Naive thymus-derived CD4-positive, alpha-beta T cell (primary cell): ENCODE measurements at regions of chr1 and their contacts with region 1.

Region 1: DNA sequence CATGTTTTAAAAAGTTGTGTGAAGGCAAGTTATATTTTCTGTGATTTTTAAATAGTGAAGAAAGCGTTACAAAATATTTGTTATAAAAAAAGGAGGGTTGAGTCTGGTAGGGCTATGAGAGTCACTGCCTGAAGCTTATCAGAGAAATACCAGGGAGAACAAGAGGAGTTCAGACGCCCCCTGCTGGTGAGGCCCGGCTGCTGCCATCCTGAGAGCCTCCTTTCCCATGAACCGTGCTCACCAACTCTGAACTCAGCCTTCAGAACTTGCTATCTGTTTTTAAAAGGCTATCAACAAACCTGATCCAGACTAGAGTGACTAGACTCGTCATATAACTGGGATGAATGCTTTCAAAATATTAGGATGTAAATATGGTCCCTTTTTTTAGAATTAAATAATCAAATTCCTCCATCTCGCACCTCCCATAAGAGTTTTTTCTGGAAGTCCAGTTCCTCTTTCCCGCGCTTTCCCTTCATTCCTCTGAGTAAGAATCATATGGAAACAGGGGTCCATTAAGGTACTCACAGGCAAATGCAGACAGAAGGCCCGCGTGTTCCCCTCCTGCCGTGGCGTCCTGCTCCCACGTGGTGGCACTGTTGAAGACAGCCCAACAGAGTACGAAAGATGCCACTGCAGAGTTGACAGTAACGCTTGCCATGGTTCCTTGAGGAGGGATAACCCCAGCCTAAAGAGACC is 26.2 kb upstream of the SPATA6 start:
- DNase-seq: peak; percentile 15 to 70 (median 55)
- ATAC-seq: peak; percentile 87
- H3K4me3 ChIP-seq: no peak overlapping the region
- H3K4me3 Mint-ChIP-seq: peak overlapping the region in 6 of 10 donors; percentile 25 to 63 (median 52)
- H3K27ac ChIP-seq: no peak overlapping the region
- H3K27ac Mint-ChIP-seq: peak overlapping the region in 1 of 9 donors; percentile 28
- H3K4me1 ChIP-seq: peaks cover 0 to 4% of the 10 kb centered on the region in 2 donors
- H3K4me1 Mint-ChIP-seq: peaks cover 5 to 11% (median 7%) of the 10 kb centered on the region in 7 donors
- H3K27me3 ChIP-seq: no peaks in the 10 kb centered on the region
- H3K27me3 Mint-ChIP-seq: peaks cover 0 to 5% (median 1%) of the 10 kb centered on the region in 5 donors

Region 2: DNA sequence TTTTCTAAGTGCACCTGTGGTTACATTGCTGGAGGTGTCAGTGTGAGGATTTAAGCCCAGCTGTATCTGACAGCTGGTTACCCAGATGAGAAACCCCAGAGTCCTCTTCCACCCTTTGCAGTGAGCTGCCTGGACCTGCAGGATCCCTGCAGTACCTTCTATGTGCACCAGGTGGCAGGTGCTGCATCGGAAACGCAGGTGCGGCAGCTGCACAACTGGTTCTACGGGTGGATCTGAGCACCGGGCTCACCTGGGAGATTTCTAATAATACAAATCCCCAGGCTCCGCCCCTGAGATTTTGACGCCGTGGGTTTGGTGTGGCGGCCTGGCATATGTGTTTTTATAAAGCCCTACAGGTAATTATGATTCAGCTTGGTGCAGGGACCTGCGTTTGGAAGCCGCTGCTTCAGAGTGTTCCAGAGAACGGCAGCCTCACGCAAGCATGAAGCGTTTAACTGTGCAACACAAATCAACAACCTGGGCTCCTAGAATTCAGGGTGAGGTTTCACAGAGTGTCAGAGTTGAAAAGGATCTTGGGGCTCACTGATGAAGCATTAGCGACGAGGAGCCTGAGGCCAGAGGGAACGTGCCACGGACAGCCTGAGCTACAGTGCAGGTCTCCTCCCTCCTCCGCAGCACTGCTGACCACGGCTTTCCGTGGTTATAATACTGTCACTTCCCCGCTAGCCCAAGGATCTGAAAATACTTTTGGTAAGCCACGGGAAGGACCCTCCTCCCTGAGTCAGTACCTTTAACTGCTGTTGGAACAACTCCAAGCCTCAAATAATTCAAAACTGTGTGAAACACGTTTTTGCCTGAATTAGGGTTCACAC is 404.3 kb before region 1 on chr1:
- CTCF ChIA-PET with region 1: interaction called, 3 read pairs
- POLR2A ChIA-PET with region 1: no interaction called
- intact Hi-C with region 1: loop called in 1 of 2 experiments (anchors 5 kb)
- DNase-seq: peak; percentile 43 to 78 (median 70)
- ATAC-seq: peak; percentile 81
- H3K4me3 ChIP-seq: peak overlapping the region; percentile 15
- H3K4me3 Mint-ChIP-seq: peak overlapping the region; percentile 1 to 83 (median 76)
- H3K27ac ChIP-seq: no peak overlapping the region
- H3K27ac Mint-ChIP-seq: peak overlapping the region in 1 of 9 donors; percentile 5
- H3K4me1 ChIP-seq: no peaks in the 10 kb centered on the region
- H3K4me1 Mint-ChIP-seq: peaks cover 4 to 9% (median 7%) of the 10 kb centered on the region in 7 donors
- H3K27me3 ChIP-seq: no peaks in the 10 kb centered on the region
- H3K27me3 Mint-ChIP-seq: peaks cover 31 to 70% (median 65%) of the 10 kb centered on the region in 5 donors

Region 3: GRCh38 chr1:48109390-48110013 is 388.7 kb before region 1 on chr1:
- CTCF ChIA-PET with region 1: interaction called, 3 read pairs
- POLR2A ChIA-PET with region 1: no interaction called
- intact Hi-C with region 1: loop called in 1 of 2 experiments (anchors 2 kb)
- DNase-seq: peak in 5 of 9 donors; percentile 5 to 29 (median 17)
- ATAC-seq: no peak
- H3K4me3 ChIP-seq: no peak overlapping the region
- H3K4me3 Mint-ChIP-seq: no peak overlapping the region
- H3K27ac ChIP-seq: no peak overlapping the region
- H3K27ac Mint-ChIP-seq: no peak overlapping the region
- H3K4me1 ChIP-seq: no peaks in the 10 kb centered on the region
- H3K4me1 Mint-ChIP-seq: peaks cover 0 to 2% (median 0%) of the 10 kb centered on the region in 7 donors
- H3K27me3 ChIP-seq: no peaks in the 10 kb centered on the region
- H3K27me3 Mint-ChIP-seq: peaks cover 10 to 19% (median 11%) of the 10 kb centered on the region in 5 donors

Region 4: GRCh38 chr1:48356901-48357300 is 141.3 kb before region 1 on chr1:
- CTCF ChIA-PET with region 1: no interaction called
- POLR2A ChIA-PET with region 1: no interaction called
- intact Hi-C with region 1: loop called in 1 of 2 experiments (anchors 10 kb)
- DNase-seq: no peak
- ATAC-seq: no peak
- H3K4me3 ChIP-seq: no peak overlapping the region
- H3K4me3 Mint-ChIP-seq: no peak overlapping the region
- H3K27ac ChIP-seq: no peak overlapping the region
- H3K27ac Mint-ChIP-seq: no peak overlapping the region
- H3K4me1 ChIP-seq: no peaks in the 10 kb centered on the region
- H3K4me1 Mint-ChIP-seq: no peaks in the 10 kb centered on the region
- H3K27me3 ChIP-seq: no peaks in the 10 kb centered on the region
- H3K27me3 Mint-ChIP-seq: no peaks in the 10 kb centered on the region

Region 5: DNA sequence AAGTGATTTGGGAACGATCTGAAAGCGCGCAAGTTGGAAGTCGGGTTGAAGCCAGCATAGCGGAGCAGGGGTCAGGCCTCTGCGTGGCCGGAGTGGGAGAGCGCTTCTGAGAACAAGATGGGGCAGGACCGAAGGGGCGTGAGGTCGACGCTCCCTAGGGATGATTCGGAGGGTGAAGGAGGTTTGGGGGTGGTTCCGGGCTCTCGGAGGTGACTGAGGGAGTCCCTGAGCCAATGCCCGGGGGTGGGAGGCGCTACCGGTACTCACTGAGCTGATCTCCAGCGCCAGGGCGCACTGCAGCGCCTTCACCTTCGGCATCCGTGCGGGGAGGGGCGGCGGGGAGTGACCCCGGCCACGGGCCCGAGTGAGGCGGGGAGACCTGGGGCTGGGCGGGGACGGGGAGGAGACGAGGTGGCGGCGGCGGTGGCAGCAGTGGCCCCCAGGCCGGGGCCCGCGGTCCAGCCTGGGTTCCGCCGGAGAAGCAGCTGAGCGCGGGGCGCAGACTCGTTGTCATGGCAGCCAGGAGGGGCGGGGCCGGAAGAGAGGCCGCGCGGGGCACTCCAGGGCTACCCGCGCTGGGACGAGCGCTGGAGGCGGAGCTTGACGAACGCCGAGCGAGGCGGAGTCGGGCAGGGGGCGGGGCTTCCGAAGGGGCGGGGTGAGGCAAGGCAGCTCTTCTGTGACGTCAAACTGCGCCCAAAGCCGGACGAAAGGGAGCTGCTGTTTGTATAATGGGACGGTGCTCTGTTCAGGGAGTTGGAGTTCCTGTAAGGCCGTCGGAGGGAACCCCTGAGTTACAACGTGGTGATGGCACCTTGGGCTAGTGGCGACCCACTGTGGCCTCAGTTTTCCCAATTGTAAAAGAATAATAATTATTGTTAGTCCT is 26.3 kb before region 1 on chr1 and contains the start of gene SPATA6:
- CTCF ChIA-PET with region 1: interaction called, 3 read pairs
- POLR2A ChIA-PET with region 1: no interaction called
- intact Hi-C with region 1: loop called in 1 of 2 experiments (anchors 2 kb)
- DNase-seq: peak; percentile 86 to 95 (median 91)
- ATAC-seq: peak; percentile 97
- H3K4me3 ChIP-seq: peak within 1 kb of the TSS; percentile 82
- H3K4me3 Mint-ChIP-seq: peak within 1 kb of the TSS; percentile 83 to 96 (median 92)
- H3K27ac ChIP-seq: peak within 1 kb of the TSS; percentile 75
- H3K27ac Mint-ChIP-seq: peak within 1 kb of the TSS; percentile 61 to 92 (median 88)
- H3K4me1 ChIP-seq: peaks cover 6 to 23% of the 10 kb centered on the region in 2 donors
- H3K4me1 Mint-ChIP-seq: peaks cover 22 to 42% (median 32%) of the 10 kb centered on the region in 7 donors
- H3K27me3 ChIP-seq: no peaks in the 10 kb centered on the region
- H3K27me3 Mint-ChIP-seq: peaks cover 0 to 27% (median 0%) of the 10 kb centered on the region in 5 donors
- total RNA-seq, gene SPATA6: 1.0 to 11.2 (median 5.4) TPM